Gastrocnemius medialis (tissue), 4 donors: ENCODE measurements at regions of chr3 and their contacts with region 1.

Region 1: GRCh38 chr3:40309418-40309924 is at the start of gene EIF1B:
- DNase-seq: peak; percentile 96 to 98
- ATAC-seq: peak; percentile 95 to 97
- H3K4me3 ChIP-seq: peak within 1 kb of the TSS; percentile 81 to 100 (median 95)
- H3K27ac ChIP-seq: peak within 1 kb of the TSS; percentile 96 to 99 (median 98)
- H3K4me1 ChIP-seq: peaks cover 41 to 49% of the 10 kb centered on the region in 2 donors
- H3K27me3 ChIP-seq: no peaks in the 10 kb centered on the region
- CTCF ChIP-seq: peak; percentile 80 to 95 (median 88)
- POLR2A ChIP-seq: peak; percentile 98
- total RNA-seq, gene EIF1B: 12.9 to 32.7 (median 24.5) TPM

Region 2: DNA sequence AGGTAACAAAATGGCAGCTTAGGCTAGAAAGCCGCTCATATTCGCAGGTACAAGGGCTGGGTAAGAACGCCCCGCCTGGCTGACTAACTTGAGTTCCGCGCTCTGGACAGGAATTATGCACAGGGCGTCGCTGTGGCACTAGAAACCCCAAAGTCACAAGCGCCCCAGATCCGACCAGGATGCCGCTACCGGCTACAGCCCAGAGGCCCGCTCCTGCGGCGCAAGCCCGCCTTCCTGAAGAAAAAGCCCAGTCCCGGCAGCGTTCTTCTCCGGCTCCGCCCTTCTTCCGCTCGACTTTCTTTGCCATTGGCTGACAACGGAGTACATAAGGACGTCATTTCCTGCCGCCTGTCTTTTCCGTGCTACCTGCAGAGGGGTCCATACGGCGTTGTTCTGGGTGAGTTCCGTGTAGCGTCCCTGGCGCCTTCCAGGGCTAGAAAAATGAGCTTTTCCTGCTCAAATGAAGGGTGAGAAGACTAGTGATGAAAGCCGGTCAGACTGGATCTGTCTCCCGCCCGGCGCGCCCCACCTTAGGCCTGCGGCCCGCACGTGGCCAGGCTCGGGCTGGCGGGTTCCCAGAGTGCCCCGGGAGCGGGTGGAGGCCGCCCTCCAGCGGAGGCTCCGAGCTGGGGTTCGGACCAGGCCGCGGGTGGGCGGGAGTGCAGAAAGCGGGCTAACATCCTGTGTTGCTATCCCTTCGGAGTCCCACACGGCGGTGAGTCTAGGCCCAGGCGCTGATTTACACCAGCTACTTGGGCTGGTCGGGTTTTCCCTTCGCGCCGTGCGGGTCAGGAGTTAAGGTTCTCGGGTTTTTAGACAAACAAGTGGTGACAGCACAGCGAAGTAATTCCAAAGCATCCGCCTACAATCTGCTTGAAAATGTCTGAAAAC is 902.9 kb before region 1 on chr3 and contains the start of gene RPSA:
- in situ Hi-C with region 1: loop called in 1 of 4 experiments (anchors 25 kb)
- intact Hi-C with region 1: no loop called
- DNase-seq: peak; percentile 93 to 94
- ATAC-seq: peak; percentile 99 to 100
- H3K4me3 ChIP-seq: peak within 1 kb of the TSS; percentile 75 to 87 (median 83)
- H3K27ac ChIP-seq: peak within 1 kb of the TSS; percentile 83 to 96 (median 88)
- H3K4me1 ChIP-seq: peaks cover 17 to 23% of the 10 kb centered on the region in 2 donors
- H3K27me3 ChIP-seq: no peaks in the 10 kb centered on the region
- CTCF ChIP-seq: peak in 4 of 5 experiments; percentile 44 to 54 (median 54)
- POLR2A ChIP-seq: peak; percentile 95 to 97
- total RNA-seq, gene RPSA: 644 to 857 (median 730) TPM

Region 3: GRCh38 chr3:42190701-42191462 is 1881.4 kb after region 1 on chr3:
- in situ Hi-C with region 1: no loop called
- intact Hi-C with region 1: loop called (anchors 10 kb)
- DNase-seq: peak; percentile 50 to 57
- ATAC-seq: peak; percentile 70 to 81
- H3K4me3 ChIP-seq: no peak overlapping the region
- H3K27ac ChIP-seq: peak overlapping the region; percentile 25 to 56 (median 39)
- H3K4me1 ChIP-seq: peaks cover 17 to 29% of the 10 kb centered on the region in 2 donors
- H3K27me3 ChIP-seq: no peaks in the 10 kb centered on the region
- CTCF ChIP-seq: peak; percentile 77 to 91 (median 88)
- POLR2A ChIP-seq: no peak